Thyroid gland (tissue), 4 donors: ENCODE measurements at regions of chr3 and their contacts with region 1.

Region 1: GRCh38 chr3:66138336-66139313 is 82.2 kb upstream of the SLC25A26 start:
- DNase-seq: peak; percentile 69 to 75
- H3K4me3 ChIP-seq: no peak overlapping the region
- H3K27ac ChIP-seq: no peak overlapping the region
- H3K4me1 ChIP-seq: no peaks in the 10 kb centered on the region
- H3K27me3 ChIP-seq: no peaks in the 10 kb centered on the region
- CTCF ChIP-seq: peak; percentile 41 to 84 (median 78)
- POLR2A ChIP-seq: no peak

Region 2: GRCh38 chr3:65783117-65783516 is 355.5 kb before region 1 on chr3:
- intact Hi-C with region 1: loop called (anchors 5 kb)
- DNase-seq: no peak
- H3K4me3 ChIP-seq: no peak overlapping the region
- H3K27ac ChIP-seq: no peak overlapping the region
- H3K4me1 ChIP-seq: peaks cover 20 to 26% of the 10 kb centered on the region in 2 donors
- H3K27me3 ChIP-seq: no peaks in the 10 kb centered on the region
- CTCF ChIP-seq: no peak
- POLR2A ChIP-seq: no peak

Region 3: GRCh38 chr3:66038726-66039589 is 99.7 kb before region 1 on chr3 and contains the start of gene MAGI1:
- intact Hi-C with region 1: loop called (anchors 5 kb)
- DNase-seq: peak; percentile 94
- H3K4me3 ChIP-seq: peak within 1 kb of the TSS; percentile 43 to 82 (median 78)
- H3K27ac ChIP-seq: peak within 1 kb of the TSS; percentile 95 to 97 (median 96)
- H3K4me1 ChIP-seq: peaks cover 9 to 19% of the 10 kb centered on the region in 2 donors
- H3K27me3 ChIP-seq: no peaks in the 10 kb centered on the region
- CTCF ChIP-seq: peak in 1 of 6 experiments; percentile 13
- POLR2A ChIP-seq: peak; percentile 68 to 85
- total RNA-seq, gene MAGI1: 60.5 to 123 (median 87.5) TPM

Region 4: GRCh38 chr3:66317750-66318376 is 179.2 kb after region 1 on chr3:
- intact Hi-C with region 1: no loop called
- DNase-seq: no peak
- H3K4me3 ChIP-seq: no peak overlapping the region
- H3K27ac ChIP-seq: no peak overlapping the region
- H3K4me1 ChIP-seq: no peaks in the 10 kb centered on the region
- H3K27me3 ChIP-seq: no peaks in the 10 kb centered on the region
- CTCF ChIP-seq: no peak
- POLR2A ChIP-seq: no peak